MCF 10A (cell line): ENCODE measurements at regions of chr6 and their contacts with region 1.

Region 1: GRCh38 chr6:166775180-166776081 is 148.4 kb upstream of the RPS6KA2 start:
- DNase-seq: peak; percentile 82
- H3K4me3 Mint-ChIP-seq: no peak overlapping the region
- H3K27ac Mint-ChIP-seq: no peak overlapping the region
- H3K4me1 Mint-ChIP-seq: peaks cover 9% of the 10 kb centered on the region
- H3K27me3 Mint-ChIP-seq: peaks cover 59% of the 10 kb centered on the region
- CTCF ChIP-seq: peak; percentile 58

Region 2: DNA sequence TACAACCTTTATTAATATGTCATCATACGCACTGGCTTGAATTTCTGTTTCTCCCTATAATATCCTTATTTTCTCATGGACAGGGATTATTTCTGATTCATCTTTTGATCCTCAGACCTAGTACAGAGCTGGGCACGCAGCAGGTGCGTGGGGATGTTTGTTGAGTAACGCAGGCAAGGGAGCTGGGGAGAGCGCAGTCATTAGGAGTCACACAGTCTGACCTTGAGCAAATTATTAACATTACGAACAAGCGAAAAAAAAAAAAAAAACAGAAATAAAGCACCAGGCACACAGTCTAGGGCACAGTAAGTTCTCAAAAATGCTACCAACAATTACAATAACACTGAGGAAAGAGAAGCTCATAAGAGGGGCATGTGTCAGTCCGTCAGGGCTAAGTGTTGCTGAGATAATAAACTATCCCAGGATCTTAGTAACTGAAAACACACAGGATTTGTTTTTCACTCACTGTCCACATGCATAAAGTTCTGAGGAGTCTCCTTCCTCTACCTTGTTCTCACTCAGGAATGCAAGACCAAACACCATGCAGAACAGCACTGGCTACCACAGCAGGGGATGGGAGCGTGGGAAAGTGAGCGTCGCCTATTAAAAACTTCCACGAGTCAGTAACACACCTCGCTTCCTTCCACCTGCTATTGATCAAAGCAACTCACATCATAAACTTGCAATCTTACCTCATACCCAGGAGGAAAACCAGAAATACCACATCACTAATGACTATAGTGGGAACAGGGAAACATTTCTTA is 1169.3 kb before region 1 on chr6:
- CTCF ChIA-PET with region 1: no interaction called
- POLR2A ChIA-PET with region 1: no interaction called
- intact Hi-C with region 1: no loop called
- DNase-seq: no peak
- H3K4me3 Mint-ChIP-seq: no peak overlapping the region
- H3K27ac Mint-ChIP-seq: no peak overlapping the region
- H3K4me1 Mint-ChIP-seq: no peaks in the 10 kb centered on the region
- H3K27me3 Mint-ChIP-seq: no peaks in the 10 kb centered on the region
- CTCF ChIP-seq: no peak

Region 3: DNA sequence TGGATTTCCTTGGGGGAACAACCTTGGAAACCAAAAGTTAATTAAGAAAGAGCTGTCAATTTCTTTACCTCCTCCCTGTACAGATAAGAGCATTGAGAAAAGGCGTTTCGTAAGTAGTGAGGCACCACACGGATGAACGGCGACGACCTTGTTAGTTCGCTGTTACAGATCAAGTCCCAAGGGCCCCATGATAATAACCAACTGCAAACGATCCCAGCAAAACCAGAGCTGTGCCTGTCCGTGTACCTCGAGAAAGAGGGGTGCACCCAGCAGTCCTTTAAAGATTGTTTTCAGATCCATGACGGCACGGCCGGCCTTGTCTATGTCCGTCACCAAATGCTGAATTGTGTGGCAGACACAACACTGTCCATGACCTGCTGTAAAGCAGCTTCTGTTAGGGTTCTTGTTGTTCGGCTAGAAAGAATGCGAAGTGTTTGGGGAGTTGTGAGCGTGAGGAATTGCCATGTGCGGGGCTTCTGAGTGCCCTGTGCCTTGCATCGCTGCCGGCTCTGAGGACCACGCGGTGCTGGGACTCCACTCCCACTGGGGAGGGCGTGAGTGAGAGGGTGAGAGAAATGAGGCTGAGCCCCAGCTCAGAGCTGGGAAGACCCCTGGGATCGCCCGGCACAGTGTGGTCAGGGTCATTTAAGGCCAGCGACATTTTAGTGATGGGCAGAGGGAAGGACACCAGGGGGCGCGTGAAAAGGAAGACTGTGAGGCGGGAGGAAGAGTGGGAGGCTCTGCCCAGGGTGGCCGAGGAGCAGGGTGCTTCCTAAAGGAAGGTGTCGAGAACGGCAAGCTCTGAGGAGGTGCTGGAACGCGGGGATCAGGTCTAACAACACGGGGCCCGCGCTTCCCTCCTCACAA is 11.6 kb before region 1 on chr6:
- CTCF ChIA-PET with region 1: interaction called, 19 read pairs
- POLR2A ChIA-PET with region 1: no interaction called
- intact Hi-C with region 1: no loop called
- DNase-seq: no peak
- H3K4me3 Mint-ChIP-seq: no peak overlapping the region
- H3K27ac Mint-ChIP-seq: no peak overlapping the region
- H3K4me1 Mint-ChIP-seq: no peaks in the 10 kb centered on the region
- H3K27me3 Mint-ChIP-seq: peaks cover 58% of the 10 kb centered on the region
- CTCF ChIP-seq: no peak

Region 4: GRCh38 chr6:166950443-166950821 is 175.0 kb after region 1 on chr6:
- CTCF ChIA-PET with region 1: interaction called, 30 read pairs
- POLR2A ChIA-PET with region 1: no interaction called
- intact Hi-C with region 1: no loop called
- DNase-seq: no peak
- H3K4me3 Mint-ChIP-seq: no peak overlapping the region
- H3K27ac Mint-ChIP-seq: no peak overlapping the region
- H3K4me1 Mint-ChIP-seq: peaks cover 16% of the 10 kb centered on the region
- H3K27me3 Mint-ChIP-seq: no peaks in the 10 kb centered on the region
- CTCF ChIP-seq: no peak

Region 5: GRCh38 chr6:166989427-166990032 is 214.1 kb after region 1 on chr6:
- CTCF ChIA-PET with region 1: interaction called, 65 read pairs
- POLR2A ChIA-PET with region 1: interaction called, 6 read pairs
- intact Hi-C with region 1: loop called (anchors 1 kb)
- DNase-seq: peak; percentile 39
- H3K4me3 Mint-ChIP-seq: no peak overlapping the region
- H3K27ac Mint-ChIP-seq: no peak overlapping the region
- H3K4me1 Mint-ChIP-seq: no peaks in the 10 kb centered on the region
- H3K27me3 Mint-ChIP-seq: no peaks in the 10 kb centered on the region
- CTCF ChIP-seq: peak; percentile 43

Region 6: GRCh38 chr6:167141667-167142432 is 366.4 kb after region 1 on chr6:
- CTCF ChIA-PET with region 1: interaction called, 19 read pairs
- POLR2A ChIA-PET with region 1: no interaction called
- intact Hi-C with region 1: no loop called
- DNase-seq: peak; percentile 49
- H3K4me3 Mint-ChIP-seq: no peak overlapping the region
- H3K27ac Mint-ChIP-seq: no peak overlapping the region
- H3K4me1 Mint-ChIP-seq: no peaks in the 10 kb centered on the region
- H3K27me3 Mint-ChIP-seq: peaks cover 66% of the 10 kb centered on the region
- CTCF ChIP-seq: peak; percentile 67